Sigmoid colon (tissue), 7 donors: ENCODE measurements at regions of chr17 and their contacts with region 1.

Region 1: DNA sequence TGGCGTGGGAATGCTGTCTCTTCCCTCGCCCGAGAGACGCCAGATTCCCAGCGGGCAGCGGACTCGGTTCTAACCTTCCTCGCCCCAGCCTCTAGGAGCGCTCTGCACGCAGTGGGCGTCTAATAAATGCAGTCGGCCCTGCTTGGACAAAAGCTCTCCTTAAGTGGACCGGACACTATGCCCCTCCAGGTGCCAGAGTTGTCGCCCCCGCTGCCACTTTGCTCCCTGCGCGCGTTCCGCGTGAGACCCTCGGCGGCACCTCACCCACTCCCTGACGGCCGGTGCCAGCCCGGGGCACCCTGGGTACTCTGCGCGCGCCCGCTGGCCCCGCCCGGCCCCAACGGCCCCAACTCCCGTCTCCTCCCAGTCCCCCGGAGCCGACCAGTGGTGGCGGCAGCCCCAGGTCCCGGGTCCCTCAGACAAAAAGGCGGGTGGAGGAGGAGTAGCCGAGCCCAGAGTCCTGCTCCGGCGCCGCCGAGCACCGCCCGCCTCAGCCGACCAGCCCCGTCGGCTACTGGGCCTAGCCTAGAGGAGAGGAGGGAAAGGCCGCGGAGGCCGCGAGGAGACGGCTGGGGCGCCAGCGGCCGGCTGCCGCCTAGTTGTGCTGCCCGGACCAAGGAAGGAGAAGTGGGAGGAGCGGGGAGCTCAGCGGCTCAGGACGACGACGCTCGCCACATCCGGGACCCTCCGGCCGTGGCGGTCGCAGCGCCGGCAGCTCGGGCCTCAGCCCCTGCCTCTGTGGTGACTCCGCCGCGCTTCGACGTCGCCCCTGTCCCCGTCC is 123.0 kb downstream of the GOSR1 start:
- DNase-seq: peak; percentile 88
- H3K4me3 ChIP-seq: peak overlapping the region; percentile 71 to 99 (median 86)
- H3K27ac ChIP-seq: peak overlapping the region; percentile 94 to 99 (median 98)
- H3K4me1 ChIP-seq: peaks cover 0 to 27% (median 10%) of the 10 kb centered on the region in 4 donors
- H3K27me3 ChIP-seq: no peaks in the 10 kb centered on the region
- CTCF ChIP-seq: peak; percentile 43 to 62 (median 50)
- EP300 ChIP-seq: no peak
- POLR2A ChIP-seq: peak; percentile 78 to 86

Region 2: DNA sequence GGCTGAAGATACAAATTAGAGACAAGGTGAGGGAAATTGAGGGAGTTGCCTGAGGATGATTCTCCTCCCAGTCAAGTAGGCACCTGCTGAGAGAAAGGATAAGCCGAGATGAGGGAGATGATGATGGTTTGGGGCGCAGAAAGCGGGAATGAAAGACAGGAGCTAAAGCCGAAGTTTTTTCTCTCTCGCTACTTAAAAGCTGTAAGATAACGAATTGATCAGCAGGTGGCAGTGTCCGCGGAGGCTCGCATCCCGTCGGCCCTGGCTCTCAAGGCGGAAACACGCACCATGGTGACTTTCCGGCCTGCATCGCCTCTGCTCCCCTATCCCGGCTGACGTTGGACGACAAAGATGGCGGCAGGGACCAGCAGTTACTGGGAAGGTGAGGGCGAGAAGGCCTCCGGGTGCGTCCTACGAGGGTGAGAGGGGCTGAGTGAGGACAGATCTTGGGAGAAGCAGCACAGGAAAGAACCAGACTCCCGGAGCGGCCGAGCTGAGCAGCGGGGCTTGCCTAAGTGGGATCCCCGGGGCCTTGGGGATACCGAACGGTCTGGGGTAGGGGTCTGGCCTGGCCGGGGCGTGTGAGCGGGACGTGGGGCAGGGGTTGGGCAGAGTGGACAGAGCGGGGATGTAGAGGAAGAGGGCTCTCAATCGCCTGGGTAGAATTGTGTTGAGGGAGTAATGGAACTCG is 123.0 kb before region 1 on chr17 and contains the start of gene GOSR1:
- intact Hi-C with region 1: loop called (anchors 1 kb)
- DNase-seq: peak; percentile 97
- H3K4me3 ChIP-seq: peak within 1 kb of the TSS; percentile 74 to 100 (median 84)
- H3K27ac ChIP-seq: peak within 1 kb of the TSS; percentile 90 to 94 (median 94)
- H3K4me1 ChIP-seq: peaks cover 0 to 22% (median 16%) of the 10 kb centered on the region in 4 donors
- H3K27me3 ChIP-seq: no peaks in the 10 kb centered on the region
- CTCF ChIP-seq: peak; percentile 60 to 79 (median 61)
- EP300 ChIP-seq: no peak
- POLR2A ChIP-seq: no peak
- total RNA-seq, gene GOSR1: 28.2 to 51.3 (median 46.3) TPM

Region 3: DNA sequence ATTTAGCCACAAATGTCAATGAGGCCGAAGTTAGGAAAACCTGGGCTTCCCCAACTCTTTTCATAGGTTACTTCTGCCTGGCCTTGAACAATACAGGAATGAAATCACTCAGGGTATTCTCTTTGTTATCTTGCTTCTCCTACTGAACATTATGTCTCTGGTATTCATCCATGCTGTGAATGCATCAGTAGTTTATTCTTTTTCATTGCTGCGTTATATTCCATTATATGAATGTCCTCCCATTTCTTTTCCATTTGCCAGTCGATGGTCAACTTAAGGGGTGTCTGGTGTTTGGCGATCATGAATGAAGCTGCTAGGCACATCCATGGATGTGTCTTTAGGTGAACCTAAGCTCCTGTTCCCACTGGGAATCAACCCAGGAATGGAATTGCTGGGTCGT is 96.0 kb after region 1 on chr17:
- intact Hi-C with region 1: loop called (anchors 5 kb)
- DNase-seq: no peak
- H3K4me3 ChIP-seq: no peak overlapping the region
- H3K27ac ChIP-seq: no peak overlapping the region
- H3K4me1 ChIP-seq: peaks cover 0 to 6% (median 5%) of the 10 kb centered on the region in 4 donors
- H3K27me3 ChIP-seq: peaks cover 0 to 9% (median 0%) of the 10 kb centered on the region in 3 donors
- CTCF ChIP-seq: no peak
- EP300 ChIP-seq: no peak
- POLR2A ChIP-seq: no peak

Region 4: GRCh38 chr17:31015639-31016038 is 415.4 kb after region 1 on chr17:
- intact Hi-C with region 1: no loop called
- DNase-seq: no peak
- H3K4me3 ChIP-seq: no peak overlapping the region
- H3K27ac ChIP-seq: no peak overlapping the region
- H3K4me1 ChIP-seq: no peaks in the 10 kb centered on the region
- H3K27me3 ChIP-seq: no peaks in the 10 kb centered on the region
- CTCF ChIP-seq: no peak
- EP300 ChIP-seq: no peak
- POLR2A ChIP-seq: no peak